Transverse colon (tissue), 4 donors: ENCODE measurements at regions of chr2 and their contacts with region 1.

Region 1: DNA sequence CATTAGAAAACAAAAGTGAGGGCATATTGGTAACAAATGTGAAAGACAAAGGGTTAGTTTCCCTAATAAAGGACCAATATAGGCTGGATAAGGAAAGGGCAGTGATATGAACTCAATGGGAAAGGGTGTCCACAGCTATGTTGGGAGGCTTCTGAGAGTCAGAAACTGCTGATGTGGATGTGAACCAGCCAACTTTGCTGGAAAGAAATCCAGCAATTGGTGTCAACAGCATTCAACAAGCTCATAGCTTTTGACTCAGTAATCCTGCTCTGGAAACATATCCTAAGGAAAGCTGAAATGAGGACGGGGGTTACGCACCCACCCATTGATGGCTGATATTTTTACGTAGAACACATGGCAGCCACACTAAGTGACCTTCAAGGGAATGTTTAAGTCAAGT is 63.7 kb downstream of the ARL4C start:
- DNase-seq: no peak
- H3K4me3 ChIP-seq: no peak overlapping the region
- H3K27ac ChIP-seq: no peak overlapping the region
- H3K4me1 ChIP-seq: no peaks in the 10 kb centered on the region
- H3K27me3 ChIP-seq: no peaks in the 10 kb centered on the region
- CTCF ChIP-seq: no peak
- EP300 ChIP-seq: no peak
- POLR2A ChIP-seq: no peak

Region 2: GRCh38 chr2:236034974-236035373 is 1601.8 kb after region 1 on chr2:
- in situ Hi-C with region 1: no loop called
- intact Hi-C with region 1: loop called (anchors 5 kb)
- DNase-seq: no peak
- H3K4me3 ChIP-seq: no peak overlapping the region
- H3K27ac ChIP-seq: no peak overlapping the region
- H3K4me1 ChIP-seq: no peaks in the 10 kb centered on the region
- H3K27me3 ChIP-seq: no peaks in the 10 kb centered on the region
- CTCF ChIP-seq: no peak
- EP300 ChIP-seq: no peak
- POLR2A ChIP-seq: no peak